ENCODE measurements at regions of chr19 and their contacts with region 1.

Region 1: DNA sequence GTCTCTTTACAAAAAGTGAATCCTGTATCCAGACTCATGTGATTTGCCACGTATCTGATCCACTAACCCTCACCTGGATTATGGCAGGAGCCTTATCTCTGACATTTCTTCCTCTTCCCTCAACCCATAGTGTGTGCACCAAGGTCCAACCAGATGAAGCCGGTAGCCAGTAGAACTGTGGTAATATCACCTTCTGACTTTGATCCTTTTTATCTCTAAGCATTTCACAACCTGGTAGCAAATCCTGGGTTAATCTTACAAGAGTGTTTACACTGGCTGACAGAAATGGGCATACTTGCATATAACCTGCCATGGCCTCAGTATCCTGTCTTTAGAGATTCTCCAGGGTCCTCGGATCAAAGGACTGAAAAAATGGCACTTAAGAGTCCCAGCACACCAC is 1.9 kb downstream of the ZNF417 start:
- DNase-seq: no peak
- ATAC-seq: no peak
- H3K4me3 ChIP-seq: peak overlapping the region; percentile 43
- H3K4me3 Mint-ChIP-seq: peak overlapping the region; percentile 93 to 99 (median 97)
- H3K27ac ChIP-seq: no peak overlapping the region
- H3K27ac Mint-ChIP-seq: peak overlapping the region in 5 of 9 donors; percentile 6 to 73 (median 47)
- H3K4me1 ChIP-seq: peaks cover 9 to 10% of the 10 kb centered on the region in 2 donors
- H3K4me1 Mint-ChIP-seq: peaks cover 21 to 39% (median 36%) of the 10 kb centered on the region in 7 donors
- H3K27me3 ChIP-seq: no peaks in the 10 kb centered on the region
- H3K27me3 Mint-ChIP-seq: no peaks in the 10 kb centered on the region

Region 2: GRCh38 chr19:57477191-57478008 is 437.1 kb before region 1 on chr19 and contains the start of gene ZNF772:
- CTCF ChIA-PET with region 1: interaction called, 7 read pairs
- POLR2A ChIA-PET with region 1: no interaction called
- intact Hi-C with region 1: loop called in 1 of 2 experiments (anchors 5 kb)
- DNase-seq: peak; percentile 55 to 96 (median 88)
- ATAC-seq: peak; percentile 99
- H3K4me3 ChIP-seq: peak within 1 kb of the TSS; percentile 80
- H3K4me3 Mint-ChIP-seq: peak within 1 kb of the TSS; percentile 87 to 95 (median 92)
- H3K27ac ChIP-seq: peak within 1 kb of the TSS; percentile 77
- H3K27ac Mint-ChIP-seq: peak within 1 kb of the TSS; percentile 84 to 96 (median 89)
- H3K4me1 ChIP-seq: peaks cover 5 to 12% of the 10 kb centered on the region in 2 donors
- H3K4me1 Mint-ChIP-seq: peaks cover 10 to 26% (median 19%) of the 10 kb centered on the region in 7 donors
- H3K27me3 ChIP-seq: no peaks in the 10 kb centered on the region
- H3K27me3 Mint-ChIP-seq: peaks cover 0 to 7% (median 0%) of the 10 kb centered on the region in 5 donors
- total RNA-seq, gene ZNF772: 1.5 to 20.5 (median 4.3) TPM

Region 3: DNA sequence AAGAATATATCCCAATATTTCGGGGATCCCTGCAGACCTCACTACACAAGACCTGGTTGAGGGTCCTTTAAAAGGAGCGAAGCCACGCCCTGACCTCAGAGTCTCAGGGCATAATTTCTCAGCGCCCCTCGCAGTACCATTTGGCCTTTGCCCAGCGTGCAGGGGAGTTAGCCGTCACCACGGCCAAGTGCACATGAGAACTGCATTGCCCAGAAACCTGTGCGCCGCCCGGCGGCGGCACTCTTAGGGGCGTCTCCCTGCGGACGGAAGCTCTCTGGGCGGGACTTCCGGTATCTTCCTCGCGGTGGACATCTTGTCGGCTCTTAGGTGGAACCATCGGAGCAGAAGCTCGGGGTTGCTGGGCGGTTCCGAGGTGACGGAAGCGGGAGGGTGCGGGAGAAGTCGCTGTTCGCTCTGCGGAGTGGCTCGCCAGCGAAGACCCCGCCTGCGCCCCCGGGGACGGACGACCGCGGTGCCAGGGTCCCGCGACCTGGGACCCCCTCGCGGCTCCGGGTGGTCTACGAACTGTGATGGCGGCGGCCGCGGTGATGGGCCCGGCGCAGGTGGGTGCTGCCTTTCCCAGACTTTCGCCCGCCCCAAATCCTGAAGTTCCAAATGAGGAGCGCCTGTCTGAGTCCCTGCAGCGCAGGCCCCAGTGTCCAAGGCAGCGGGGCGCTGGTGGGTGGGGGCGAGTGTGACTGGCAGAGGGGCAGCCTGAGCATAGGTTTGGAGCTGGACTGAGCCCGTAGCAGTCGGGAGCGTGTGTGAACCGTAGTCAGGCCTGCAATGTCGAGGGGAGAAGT is 300.4 kb before region 1 on chr19 and contains the start of gene ZNF134:
- CTCF ChIA-PET with region 1: interaction called, 4 read pairs
- POLR2A ChIA-PET with region 1: no interaction called
- intact Hi-C with region 1: loop called in 1 of 2 experiments (anchors 1 kb)
- DNase-seq: peak; percentile 74 to 90 (median 84)
- ATAC-seq: peak; percentile 100
- H3K4me3 ChIP-seq: peak within 1 kb of the TSS; percentile 94
- H3K4me3 Mint-ChIP-seq: peak within 1 kb of the TSS; percentile 79 to 95 (median 90)
- H3K27ac ChIP-seq: peak within 1 kb of the TSS; percentile 76
- H3K27ac Mint-ChIP-seq: peak within 1 kb of the TSS; percentile 78 to 92 (median 86)
- H3K4me1 ChIP-seq: peaks cover 14 to 15% of the 10 kb centered on the region in 2 donors
- H3K4me1 Mint-ChIP-seq: peaks cover 18 to 43% (median 34%) of the 10 kb centered on the region in 7 donors
- H3K27me3 ChIP-seq: no peaks in the 10 kb centered on the region
- H3K27me3 Mint-ChIP-seq: no peaks in the 10 kb centered on the region
- total RNA-seq, gene ZNF134: 14.6 to 33.9 (median 25.7) TPM

Region 4: GRCh38 chr19:57664269-57665127 is 250.0 kb before region 1 on chr19:
- CTCF ChIA-PET with region 1: no interaction called
- POLR2A ChIA-PET with region 1: no interaction called
- intact Hi-C with region 1: no loop called
- DNase-seq: peak in 5 of 9 donors; percentile 2 to 28 (median 11)
- ATAC-seq: peak; percentile 38
- H3K4me3 ChIP-seq: no peak overlapping the region
- H3K4me3 Mint-ChIP-seq: peak overlapping the region; percentile 63 to 91 (median 73)
- H3K27ac ChIP-seq: no peak overlapping the region
- H3K27ac Mint-ChIP-seq: no peak overlapping the region
- H3K4me1 ChIP-seq: peaks cover 0 to 3% of the 10 kb centered on the region in 2 donors
- H3K4me1 Mint-ChIP-seq: peaks cover 0 to 7% (median 4%) of the 10 kb centered on the region in 7 donors
- H3K27me3 ChIP-seq: peaks cover 0 to 13% of the 10 kb centered on the region in 2 donors
- H3K27me3 Mint-ChIP-seq: peaks cover 12 to 73% (median 52%) of the 10 kb centered on the region in 5 donors

Region 5: GRCh38 chr19:57769345-57770131 is 145.0 kb before region 1 on chr19 and contains the start of gene ZNF586:
- CTCF ChIA-PET with region 1: no interaction called
- POLR2A ChIA-PET with region 1: interaction called, 4 read pairs
- intact Hi-C with region 1: loop called in 1 of 2 experiments (anchors 1 kb)
- DNase-seq: peak; percentile 64 to 89 (median 82)
- ATAC-seq: peak; percentile 99
- H3K4me3 ChIP-seq: peak within 1 kb of the TSS; percentile 91
- H3K4me3 Mint-ChIP-seq: peak within 1 kb of the TSS; percentile 90 to 98 (median 96)
- H3K27ac ChIP-seq: peak within 1 kb of the TSS; percentile 86
- H3K27ac Mint-ChIP-seq: peak within 1 kb of the TSS; percentile 79 to 97 (median 94)
- H3K4me1 ChIP-seq: peaks cover 6 to 12% of the 10 kb centered on the region in 2 donors
- H3K4me1 Mint-ChIP-seq: peaks cover 8 to 47% (median 38%) of the 10 kb centered on the region in 7 donors
- H3K27me3 ChIP-seq: no peaks in the 10 kb centered on the region
- H3K27me3 Mint-ChIP-seq: no peaks in the 10 kb centered on the region
- total RNA-seq, gene ZNF586: 16.4 to 47.5 (median 42.6) TPM

Region 6: DNA sequence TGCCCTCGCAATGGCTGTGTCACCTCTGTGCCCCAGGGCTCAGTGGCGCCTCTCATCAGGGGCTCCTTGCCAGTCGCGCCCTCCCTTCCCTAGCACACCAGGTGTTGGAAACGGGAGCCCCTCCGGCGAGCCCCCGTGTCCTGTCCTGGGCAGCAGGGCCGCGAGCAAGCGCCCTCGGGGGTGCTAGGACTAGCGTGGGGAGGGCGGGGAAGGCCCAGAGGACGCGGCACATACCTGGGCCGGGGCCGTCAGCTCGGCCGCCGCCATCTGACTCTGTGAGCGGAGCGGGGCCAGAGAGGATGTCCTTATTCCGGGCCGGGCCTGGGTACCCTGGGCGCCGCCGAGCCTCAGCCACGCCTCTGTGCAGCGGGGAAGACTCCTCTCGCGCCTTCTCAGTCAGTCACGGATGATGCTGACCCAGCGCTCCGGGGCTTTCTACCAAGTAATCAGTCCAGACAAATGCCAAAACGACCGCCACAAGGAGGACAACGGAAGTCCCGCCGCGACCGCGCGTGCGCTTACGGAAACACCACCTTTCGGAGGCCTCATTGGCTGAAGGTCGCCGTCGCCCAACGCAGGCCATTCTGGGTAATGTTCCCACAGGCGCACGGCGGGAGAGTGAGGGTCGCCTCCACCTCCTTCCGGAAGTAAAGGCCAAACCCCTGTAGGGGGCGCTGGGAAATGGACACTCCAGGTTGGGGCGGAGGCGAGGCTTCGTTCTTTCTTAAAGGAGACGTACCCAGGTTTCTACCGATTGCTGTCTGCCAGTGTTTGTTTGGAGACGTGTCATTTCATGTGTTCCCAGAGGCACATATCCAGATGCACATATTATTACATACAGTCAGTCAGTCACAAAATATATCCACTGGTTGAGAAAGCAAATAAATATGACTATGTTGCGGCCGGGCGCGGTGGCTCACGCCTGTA is 32.9 kb after region 1 on chr19 and contains the start of gene ZNF256:
- CTCF ChIA-PET with region 1: interaction called, 5 read pairs
- POLR2A ChIA-PET with region 1: interaction called, 7 read pairs
- intact Hi-C with region 1: loop called (anchors 1 to 2 kb)
- DNase-seq: peak; percentile 55 to 85 (median 77)
- ATAC-seq: peak; percentile 97
- H3K4me3 ChIP-seq: peak within 1 kb of the TSS; percentile 71
- H3K4me3 Mint-ChIP-seq: peak within 1 kb of the TSS; percentile 89 to 97 (median 95)
- H3K27ac ChIP-seq: peak within 1 kb of the TSS; percentile 80
- H3K27ac Mint-ChIP-seq: peak within 1 kb of the TSS; percentile 83 to 97 (median 92)
- H3K4me1 ChIP-seq: peaks cover 6 to 9% of the 10 kb centered on the region in 2 donors
- H3K4me1 Mint-ChIP-seq: peaks cover 10 to 28% (median 21%) of the 10 kb centered on the region in 7 donors
- H3K27me3 ChIP-seq: no peaks in the 10 kb centered on the region
- H3K27me3 Mint-ChIP-seq: peaks cover 0 to 4% (median 0%) of the 10 kb centered on the region in 5 donors
- total RNA-seq, gene ZNF256: 5.2 to 13.8 (median 11.8) TPM

Measured in naive thymus-derived CD4-positive, alpha-beta T cell (primary cell).